ENCODE measurements at regions of chr11 and their contacts with region 1.

Region 1: GRCh38 chr11:116835791-116836631 is 1.4 kb downstream of the APOA1 start:
- DNase-seq: peak; percentile 78 to 82 (median 80)
- H3K4me3 ChIP-seq: peak overlapping the region; percentile 36 to 60
- H3K4me3 Mint-ChIP-seq: peak overlapping the region; percentile 67 to 87 (median 78)
- H3K27ac ChIP-seq: no peak overlapping the region
- H3K27ac Mint-ChIP-seq: peak overlapping the region in 6 of 7 donors; percentile 29 to 76 (median 64)
- H3K4me1 ChIP-seq: peaks cover 15% of the 10 kb centered on the region
- H3K4me1 Mint-ChIP-seq: peaks cover 4 to 21% (median 9%) of the 10 kb centered on the region in 4 donors
- H3K27me3 ChIP-seq: no peaks in the 10 kb centered on the region
- H3K27me3 Mint-ChIP-seq: no peaks in the 10 kb centered on the region

Region 2: GRCh38 chr11:115488945-115489344 is 1347.1 kb before region 1 on chr11:
- CTCF ChIA-PET with region 1: no interaction called
- POLR2A ChIA-PET with region 1: no interaction called
- intact Hi-C with region 1: no loop called
- DNase-seq: no peak
- H3K4me3 ChIP-seq: no peak overlapping the region
- H3K4me3 Mint-ChIP-seq: no peak overlapping the region
- H3K27ac ChIP-seq: no peak overlapping the region
- H3K27ac Mint-ChIP-seq: no peak overlapping the region
- H3K4me1 ChIP-seq: no peaks in the 10 kb centered on the region
- H3K4me1 Mint-ChIP-seq: no peaks in the 10 kb centered on the region
- H3K27me3 ChIP-seq: no peaks in the 10 kb centered on the region
- H3K27me3 Mint-ChIP-seq: peaks cover 4 to 5% of the 10 kb centered on the region in 2 donors

Region 3: DNA sequence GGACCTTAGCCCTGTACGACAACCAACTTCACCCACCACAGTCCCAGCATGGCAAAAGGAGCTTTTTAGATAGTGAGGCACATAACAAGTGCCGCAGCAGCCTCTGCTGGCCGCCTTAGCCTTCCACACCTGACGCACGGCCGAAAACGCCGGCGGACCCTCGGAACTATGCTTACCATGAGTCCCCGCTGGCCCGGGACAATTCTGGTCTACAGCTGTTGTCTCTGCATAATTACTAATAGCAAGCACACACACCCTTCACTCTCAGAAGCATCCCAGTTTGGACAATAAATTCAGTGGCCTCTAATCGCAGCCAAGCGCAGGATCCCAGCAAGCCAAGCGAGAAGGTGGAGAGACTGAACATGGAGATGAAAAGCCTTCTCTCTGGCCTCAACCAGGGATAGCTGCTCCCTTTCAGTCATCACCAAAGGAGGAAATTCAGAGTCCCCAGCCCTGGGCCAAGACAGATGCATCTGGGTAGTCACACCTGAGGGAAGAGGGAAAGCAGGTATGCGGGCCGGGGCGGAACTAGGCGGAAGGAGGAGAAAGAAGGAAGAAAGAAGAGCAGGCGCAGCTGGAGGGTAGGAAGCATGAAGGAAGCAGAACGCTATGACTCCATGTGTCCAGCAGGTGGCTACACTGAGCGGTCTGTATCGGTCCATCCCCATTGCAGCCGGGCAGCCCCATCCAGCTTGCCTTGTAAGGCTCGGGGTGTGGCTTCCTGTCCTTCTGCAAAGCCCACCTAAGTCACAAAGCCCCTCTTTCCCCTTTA is 103.6 kb before region 1 on chr11:
- CTCF ChIA-PET with region 1: interaction called, 19 read pairs
- POLR2A ChIA-PET with region 1: interaction called, 4 read pairs
- intact Hi-C with region 1: loop called (anchors 1 kb)
- DNase-seq: peak in 4 of 5 donors; percentile 41 to 50 (median 44)
- H3K4me3 ChIP-seq: no peak overlapping the region
- H3K4me3 Mint-ChIP-seq: peak overlapping the region in 1 of 8 donors; percentile 51
- H3K27ac ChIP-seq: no peak overlapping the region
- H3K27ac Mint-ChIP-seq: no peak overlapping the region
- H3K4me1 ChIP-seq: peaks cover 8% of the 10 kb centered on the region
- H3K4me1 Mint-ChIP-seq: peaks cover 4 to 9% (median 7%) of the 10 kb centered on the region in 4 donors
- H3K27me3 ChIP-seq: no peaks in the 10 kb centered on the region
- H3K27me3 Mint-ChIP-seq: peaks cover 2 to 8% of the 10 kb centered on the region in 2 donors

Region 4: DNA sequence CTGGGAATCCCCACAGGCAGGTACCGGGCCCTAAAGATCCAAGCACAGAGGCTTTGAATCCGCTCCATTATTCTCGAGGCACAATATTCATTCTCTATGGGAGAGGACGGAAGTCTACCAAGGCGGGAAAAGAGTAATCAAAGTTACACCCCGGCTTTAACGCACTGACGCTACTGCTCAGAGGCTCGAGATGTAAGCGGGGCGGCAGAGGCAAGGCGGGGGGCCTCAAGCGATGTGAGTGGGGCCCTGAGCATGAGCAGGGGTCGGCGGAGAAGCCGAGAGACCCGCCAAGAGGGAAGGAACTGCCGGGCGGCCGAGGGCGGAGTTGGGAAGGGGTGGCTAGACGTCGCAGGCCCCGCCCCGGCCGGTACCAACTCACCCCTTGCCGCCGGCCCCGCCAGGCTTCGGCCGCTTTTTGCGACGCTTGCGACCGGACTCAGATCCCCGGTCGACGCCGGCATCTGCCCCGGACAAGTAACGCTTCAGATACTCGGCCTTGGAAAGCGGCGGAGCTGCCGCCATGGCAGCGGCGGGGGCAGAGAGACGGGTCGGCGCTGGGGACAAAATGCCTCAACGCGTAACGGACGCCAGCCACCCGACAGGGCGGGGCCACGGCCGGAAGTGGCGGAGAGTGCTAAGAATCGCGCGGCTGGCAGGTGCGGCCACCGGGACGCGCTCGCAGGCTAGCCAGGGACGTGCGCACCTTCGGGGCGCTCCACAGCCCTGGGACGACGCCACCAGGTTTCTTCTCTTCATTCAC is 63.4 kb before region 1 on chr11 and contains the start of gene BUD13:
- CTCF ChIA-PET with region 1: interaction called, 5 read pairs
- POLR2A ChIA-PET with region 1: interaction called, 7 read pairs
- intact Hi-C with region 1: loop called (anchors 1 kb)
- DNase-seq: peak; percentile 92 to 96 (median 93)
- H3K4me3 ChIP-seq: peak within 1 kb of the TSS; percentile 71 to 93
- H3K4me3 Mint-ChIP-seq: peak within 1 kb of the TSS; percentile 97 to 100 (median 98)
- H3K27ac ChIP-seq: peak within 1 kb of the TSS; percentile 94
- H3K27ac Mint-ChIP-seq: peak within 1 kb of the TSS; percentile 94 to 99 (median 98)
- H3K4me1 ChIP-seq: peaks cover 24% of the 10 kb centered on the region
- H3K4me1 Mint-ChIP-seq: peaks cover 24 to 47% (median 35%) of the 10 kb centered on the region in 4 donors
- H3K27me3 ChIP-seq: no peaks in the 10 kb centered on the region
- H3K27me3 Mint-ChIP-seq: no peaks in the 10 kb centered on the region
- total RNA-seq, gene BUD13: 19.9 to 23.1 TPM

Region 5: DNA sequence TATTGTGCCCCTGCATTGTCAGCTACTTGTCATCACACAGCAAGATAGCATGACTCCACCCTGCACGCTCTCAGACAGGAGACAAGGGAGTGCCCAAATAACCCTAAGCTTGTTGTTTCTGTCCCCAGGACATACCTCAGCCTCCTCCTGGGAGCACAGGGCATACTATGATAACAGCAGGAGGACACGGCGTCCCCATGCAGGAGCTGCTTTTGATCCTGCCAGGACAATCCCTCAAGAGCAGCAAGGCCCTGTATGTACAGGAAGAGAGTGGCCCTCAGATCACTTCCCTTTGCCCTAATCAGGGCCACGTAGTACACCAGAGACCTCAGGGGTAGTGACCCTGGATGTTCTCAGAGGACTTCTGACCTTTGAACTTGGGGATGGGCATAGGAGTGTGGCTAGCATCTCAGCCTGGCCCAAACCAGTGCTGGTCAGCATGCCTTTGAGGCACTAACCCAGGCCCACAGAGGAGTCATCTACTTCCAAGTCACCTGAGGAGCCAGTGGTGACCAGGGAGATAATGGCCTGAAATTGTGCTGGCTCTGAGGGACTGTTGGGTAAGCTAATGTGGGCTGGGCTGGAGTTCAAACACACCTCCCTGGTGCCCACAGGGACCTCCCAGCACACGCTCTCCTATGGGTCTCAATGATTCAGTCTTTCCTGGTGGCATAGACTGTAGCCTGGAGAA is 22.1 kb before region 1 on chr11:
- CTCF ChIA-PET with region 1: interaction called, 10 read pairs
- POLR2A ChIA-PET with region 1: no interaction called
- intact Hi-C with region 1: no loop called
- DNase-seq: no peak
- H3K4me3 ChIP-seq: no peak overlapping the region
- H3K4me3 Mint-ChIP-seq: no peak overlapping the region
- H3K27ac ChIP-seq: no peak overlapping the region
- H3K27ac Mint-ChIP-seq: no peak overlapping the region
- H3K4me1 ChIP-seq: no peaks in the 10 kb centered on the region
- H3K4me1 Mint-ChIP-seq: no peaks in the 10 kb centered on the region
- H3K27me3 ChIP-seq: no peaks in the 10 kb centered on the region
- H3K27me3 Mint-ChIP-seq: peaks cover 0 to 2% of the 10 kb centered on the region in 2 donors

Region 6: GRCh38 chr11:116853461-116854073 is 17.6 kb after region 1 on chr11:
- CTCF ChIA-PET with region 1: interaction called, 168 read pairs
- POLR2A ChIA-PET with region 1: interaction called, 103 read pairs
- intact Hi-C with region 1: loop called (anchors 1 kb)
- DNase-seq: peak; percentile 81 to 91 (median 85)
- H3K4me3 ChIP-seq: peak overlapping the region; percentile 8 to 38
- H3K4me3 Mint-ChIP-seq: peak overlapping the region; percentile 53 to 90 (median 77)
- H3K27ac ChIP-seq: peak overlapping the region; percentile 52
- H3K27ac Mint-ChIP-seq: peak overlapping the region; percentile 83 to 98 (median 95)
- H3K4me1 ChIP-seq: peaks cover 81% of the 10 kb centered on the region
- H3K4me1 Mint-ChIP-seq: peaks cover 67 to 84% (median 74%) of the 10 kb centered on the region in 4 donors
- H3K27me3 ChIP-seq: no peaks in the 10 kb centered on the region
- H3K27me3 Mint-ChIP-seq: no peaks in the 10 kb centered on the region

Region 7: GRCh38 chr11:116879800-116880625 is 44.0 kb after region 1 on chr11:
- CTCF ChIA-PET with region 1: interaction called, 19 read pairs
- POLR2A ChIA-PET with region 1: interaction called, 7 read pairs
- intact Hi-C with region 1: no loop called
- DNase-seq: peak; percentile 39 to 56 (median 50)
- H3K4me3 ChIP-seq: no peak overlapping the region
- H3K4me3 Mint-ChIP-seq: no peak overlapping the region
- H3K27ac ChIP-seq: no peak overlapping the region
- H3K27ac Mint-ChIP-seq: peak overlapping the region; percentile 35 to 79 (median 64)
- H3K4me1 ChIP-seq: no peaks in the 10 kb centered on the region
- H3K4me1 Mint-ChIP-seq: peaks cover 10 to 12% (median 11%) of the 10 kb centered on the region in 4 donors
- H3K27me3 ChIP-seq: no peaks in the 10 kb centered on the region
- H3K27me3 Mint-ChIP-seq: no peaks in the 10 kb centered on the region